Activated naive CD4-positive, alpha-beta T cell treated with anti-CD3 and anti-CD28 coated beads, Interleukin-2, amount 10 ng/mL, durations not matched to agents 7 days and 5 days (primary cell): ENCODE measurements at regions of chr12 and their contacts with region 1.

Region 1: DNA sequence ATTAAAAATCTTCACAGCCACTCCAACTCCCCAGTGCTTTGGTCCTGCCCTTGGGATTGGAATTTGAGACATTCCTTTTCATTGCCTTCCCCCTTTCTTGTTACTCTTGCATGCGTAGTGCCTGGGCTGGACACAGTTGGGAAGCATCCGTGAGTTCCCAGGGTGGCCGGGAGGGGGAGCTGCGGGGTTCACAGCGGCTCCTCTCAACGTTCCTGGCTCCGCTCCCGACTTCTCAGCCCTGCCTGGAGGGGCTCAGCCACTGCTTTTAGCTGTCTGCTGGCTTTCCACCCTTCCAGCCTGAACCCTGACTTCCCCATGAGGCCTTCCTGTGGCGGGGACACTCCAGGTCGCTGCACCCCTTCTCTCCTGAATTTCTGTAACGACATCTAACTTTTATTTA is 3.2 kb downstream of the TEX52 start:
- DNase-seq: peak; percentile 67
- H3K4me3 Mint-ChIP-seq: no peak overlapping the region
- H3K27ac Mint-ChIP-seq: no peak overlapping the region
- H3K4me1 Mint-ChIP-seq: no peaks in the 10 kb centered on the region
- H3K27me3 Mint-ChIP-seq: no peaks in the 10 kb centered on the region

Region 2: DNA sequence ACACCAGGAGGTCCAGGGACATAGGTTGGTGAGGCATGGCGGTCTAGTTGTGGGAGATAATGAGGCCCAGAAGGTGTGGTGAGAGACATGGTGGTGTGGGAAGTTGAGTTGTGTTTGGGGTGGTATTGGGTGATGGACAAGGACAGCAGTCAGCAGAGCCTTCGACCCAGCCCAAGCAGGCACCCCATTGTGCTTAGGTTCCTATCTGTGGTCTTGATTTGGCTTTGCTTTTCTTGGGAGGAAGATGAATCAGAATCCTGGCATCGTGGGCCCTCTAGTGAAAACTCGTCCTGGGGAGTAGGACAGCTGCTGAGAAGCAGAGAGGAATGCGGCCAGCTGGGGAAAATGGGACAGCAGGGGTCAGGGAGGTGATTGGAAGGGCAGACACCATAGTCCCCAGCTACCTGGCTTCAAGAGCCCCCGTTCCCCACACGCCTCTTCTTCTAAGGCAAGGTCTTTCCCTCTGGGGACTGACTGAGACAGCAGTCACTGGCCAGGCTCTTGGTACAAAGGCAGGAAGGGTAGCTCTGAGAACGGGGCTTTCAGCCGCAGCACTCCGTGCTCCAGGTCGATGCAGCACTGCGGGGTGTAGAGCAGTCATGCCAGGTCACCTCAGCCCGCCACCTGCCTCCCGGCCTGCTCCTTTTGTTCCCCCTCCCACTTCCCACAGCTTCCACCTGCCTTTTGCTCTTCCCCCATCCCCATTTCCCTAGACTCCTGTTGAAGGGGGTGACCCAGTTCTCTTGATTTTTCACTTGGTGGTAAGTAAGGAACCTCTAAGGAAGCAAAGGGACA is 26.7 kb before region 1 on chr12:
- CTCF ChIA-PET with region 1: no interaction called
- DNase-seq: no peak
- H3K4me3 Mint-ChIP-seq: no peak overlapping the region
- H3K27ac Mint-ChIP-seq: peak overlapping the region; percentile 51
- H3K4me1 Mint-ChIP-seq: no peaks in the 10 kb centered on the region
- H3K27me3 Mint-ChIP-seq: no peaks in the 10 kb centered on the region

Region 3: GRCh38 chr12:2944401-2945047 is 90.9 kb after region 1 on chr12:
- CTCF ChIA-PET with region 1: interaction called, 35 read pairs
- DNase-seq: peak; percentile 79
- H3K4me3 Mint-ChIP-seq: no peak overlapping the region
- H3K27ac Mint-ChIP-seq: no peak overlapping the region
- H3K4me1 Mint-ChIP-seq: peaks cover 4% of the 10 kb centered on the region
- H3K27me3 Mint-ChIP-seq: peaks cover 14% of the 10 kb centered on the region

Region 4: GRCh38 chr12:3041558-3042164 is 188.0 kb after region 1 on chr12:
- CTCF ChIA-PET with region 1: interaction called, 15 read pairs
- DNase-seq: peak; percentile 74
- H3K4me3 Mint-ChIP-seq: no peak overlapping the region
- H3K27ac Mint-ChIP-seq: no peak overlapping the region
- H3K4me1 Mint-ChIP-seq: no peaks in the 10 kb centered on the region
- H3K27me3 Mint-ChIP-seq: peaks cover 33% of the 10 kb centered on the region